ENCODE measurements at regions of chr15 and their contacts with region 1.

Region 1: GRCh38 chr15:60507596-60508424 is 28.9 kb upstream of the ICE2 start:
- DNase-seq: peak; percentile 56
- H3K4me3 Mint-ChIP-seq: no peak overlapping the region
- H3K27ac Mint-ChIP-seq: peak overlapping the region; percentile 69
- H3K4me1 Mint-ChIP-seq: peaks cover 56% of the 10 kb centered on the region
- H3K27me3 Mint-ChIP-seq: no peaks in the 10 kb centered on the region

Region 2: DNA sequence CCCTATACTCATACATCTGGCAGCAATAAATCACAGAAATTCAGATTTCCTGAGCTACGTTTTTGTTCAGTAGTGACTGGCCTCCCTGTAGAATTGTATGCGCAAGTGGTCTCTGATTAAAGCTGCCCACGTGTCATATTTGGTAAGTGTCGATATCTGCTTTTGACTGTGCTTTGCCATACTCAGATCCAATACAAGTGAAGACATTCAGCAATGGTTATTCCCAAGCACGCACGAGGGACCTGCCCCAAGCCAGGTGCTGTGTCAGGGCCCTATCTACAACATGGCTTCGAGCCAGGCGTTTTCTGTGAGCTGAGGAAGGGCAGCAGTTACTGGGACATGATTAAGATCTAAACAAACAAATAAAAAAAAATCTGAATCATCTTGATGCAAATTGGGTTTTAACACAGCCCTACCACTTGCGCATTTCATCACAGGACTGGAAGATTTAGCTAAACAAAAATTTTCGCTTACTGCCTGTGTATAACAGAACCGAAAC is 18.4 kb after region 1 on chr15:
- CTCF ChIA-PET with region 1: interaction called, 196 read pairs
- POLR2A ChIA-PET with region 1: interaction called, 21 read pairs
- intact Hi-C with region 1: no loop called
- DNase-seq: peak; percentile 47
- H3K4me3 Mint-ChIP-seq: no peak overlapping the region
- H3K27ac Mint-ChIP-seq: peak overlapping the region; percentile 75
- H3K4me1 Mint-ChIP-seq: peaks cover 73% of the 10 kb centered on the region
- H3K27me3 Mint-ChIP-seq: no peaks in the 10 kb centered on the region

Region 3: DNA sequence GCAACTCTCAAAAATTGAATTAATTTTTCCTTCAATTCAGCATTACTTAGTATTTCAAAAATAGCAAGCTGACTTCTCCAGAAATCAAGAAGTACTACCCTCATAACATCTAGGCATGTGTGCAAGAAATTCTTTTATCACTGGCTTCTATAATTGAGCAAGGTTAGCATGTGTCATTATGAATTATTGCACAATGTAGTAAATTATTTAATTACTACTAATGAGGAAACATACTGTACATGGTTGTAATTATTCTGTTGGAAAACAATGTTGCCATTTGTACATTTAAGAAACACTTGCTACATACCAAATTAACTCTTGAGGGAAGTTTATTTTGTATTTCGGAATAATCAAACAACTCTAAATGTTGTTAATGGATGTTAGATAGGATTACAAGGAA is 93.3 kb after region 1 on chr15:
- CTCF ChIA-PET with region 1: no interaction called
- POLR2A ChIA-PET with region 1: no interaction called
- intact Hi-C with region 1: no loop called
- DNase-seq: no peak
- H3K4me3 Mint-ChIP-seq: no peak overlapping the region
- H3K27ac Mint-ChIP-seq: no peak overlapping the region
- H3K4me1 Mint-ChIP-seq: peaks cover 11% of the 10 kb centered on the region
- H3K27me3 Mint-ChIP-seq: no peaks in the 10 kb centered on the region

Region 4: DNA sequence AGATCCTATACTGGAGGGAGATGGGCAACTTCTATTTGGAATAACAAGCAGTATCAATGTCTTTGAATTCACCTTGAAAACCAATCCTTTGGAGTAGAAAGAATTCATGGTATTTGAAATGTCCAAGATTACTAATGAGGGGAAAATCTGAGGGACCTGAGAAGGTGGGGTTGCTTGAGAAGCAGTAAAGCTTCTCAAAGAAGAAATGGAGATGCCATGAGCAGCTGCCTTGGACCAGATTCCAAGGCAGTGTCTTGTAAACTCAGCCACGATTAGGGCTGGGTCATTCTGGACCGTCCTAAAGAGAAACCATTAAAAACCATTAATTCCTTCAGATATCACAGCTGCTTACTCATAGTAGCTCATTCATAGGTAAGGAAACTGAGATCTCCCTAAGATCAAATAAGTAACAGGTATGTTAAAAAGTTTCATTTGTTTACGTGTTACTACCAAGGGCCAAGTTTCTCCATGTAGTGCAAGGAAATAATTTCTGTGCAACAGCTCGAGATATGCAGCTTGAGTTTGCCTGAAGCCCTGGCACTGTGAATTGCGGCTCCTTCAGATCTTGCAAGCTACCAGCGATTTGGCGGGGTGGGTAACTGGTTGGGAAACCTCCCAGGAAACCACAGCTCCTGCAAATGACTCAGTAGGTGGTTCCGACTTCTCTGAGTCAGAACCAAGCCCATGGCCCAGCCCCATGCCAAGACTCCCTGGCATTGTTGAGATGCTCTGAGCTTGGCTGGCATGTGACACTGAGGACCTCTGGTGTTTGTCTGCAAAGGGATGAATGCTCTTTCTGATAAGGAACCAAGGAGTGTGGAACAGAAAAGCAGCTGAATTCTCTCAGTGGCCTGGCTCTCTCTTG is 424.5 kb after region 1 on chr15:
- CTCF ChIA-PET with region 1: interaction called, 19 read pairs
- POLR2A ChIA-PET with region 1: interaction called, 3 read pairs
- intact Hi-C with region 1: loop called (anchors 2 kb)
- DNase-seq: peak; percentile 86
- H3K4me3 Mint-ChIP-seq: no peak overlapping the region
- H3K27ac Mint-ChIP-seq: no peak overlapping the region
- H3K4me1 Mint-ChIP-seq: peaks cover 15% of the 10 kb centered on the region
- H3K27me3 Mint-ChIP-seq: peaks cover 7% of the 10 kb centered on the region

Measured in activated CD4-positive, alpha-beta memory T cell treated with anti-CD3 and anti-CD28 coated beads for 36 hours (primary cell).